Ovary (tissue), 10 donors: ENCODE measurements at regions of chr11 and their contacts with region 1.

Region 1: DNA sequence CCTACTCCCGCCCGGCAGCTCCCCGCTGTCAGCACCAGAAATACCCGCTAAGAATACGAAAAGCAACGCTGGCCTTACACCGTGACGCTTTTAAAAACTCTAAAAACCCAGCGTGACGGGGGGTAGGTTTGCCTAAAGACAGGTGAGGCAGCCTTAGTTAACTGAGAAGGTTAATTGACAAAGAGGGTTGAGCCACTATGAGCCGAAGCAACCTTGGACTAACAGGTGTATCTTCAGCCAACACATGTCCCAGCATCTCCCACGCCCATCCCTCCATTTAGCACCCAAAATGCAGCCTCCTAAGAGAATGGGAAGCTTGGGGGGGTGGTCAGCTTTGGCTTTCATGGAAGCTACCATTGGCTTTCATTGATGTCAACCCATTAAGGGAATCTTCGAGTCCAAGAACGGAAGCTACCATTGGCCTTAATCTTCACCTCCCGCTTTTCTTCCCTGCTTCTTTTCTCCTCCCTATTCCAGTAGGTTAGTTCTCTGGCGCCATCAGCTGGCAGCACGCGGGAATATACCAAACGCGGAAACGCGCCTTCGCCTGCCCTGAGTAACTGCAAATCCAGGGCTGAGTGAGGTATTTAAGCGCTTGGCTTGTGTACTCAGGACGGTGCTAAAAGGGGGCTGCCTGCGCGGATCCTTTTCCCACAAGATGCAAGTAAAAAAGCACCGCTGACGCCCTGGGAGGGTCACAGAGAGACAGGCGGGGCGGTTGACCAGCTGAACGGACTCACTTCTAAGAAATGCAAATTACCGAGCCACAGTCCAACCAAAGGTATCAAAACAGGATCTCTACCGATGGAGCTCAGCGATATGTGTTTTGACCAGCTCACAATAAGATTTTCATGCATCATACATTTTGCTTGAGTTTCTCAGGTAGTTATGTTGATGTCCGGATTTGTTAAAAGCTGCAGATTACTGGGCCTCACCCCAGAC is 38.5 kb upstream of the GLYATL1 start:
- DNase-seq: peak in 1 of 5 donors; percentile 35
- H3K4me3 ChIP-seq: no peak overlapping the region
- H3K27ac ChIP-seq: no peak overlapping the region
- H3K4me1 ChIP-seq: no peaks in the 10 kb centered on the region
- H3K27me3 ChIP-seq: no peaks in the 10 kb centered on the region
- CTCF ChIP-seq: no peak
- EP300 ChIP-seq: no peak
- POLR2A ChIP-seq: no peak

Region 2: DNA sequence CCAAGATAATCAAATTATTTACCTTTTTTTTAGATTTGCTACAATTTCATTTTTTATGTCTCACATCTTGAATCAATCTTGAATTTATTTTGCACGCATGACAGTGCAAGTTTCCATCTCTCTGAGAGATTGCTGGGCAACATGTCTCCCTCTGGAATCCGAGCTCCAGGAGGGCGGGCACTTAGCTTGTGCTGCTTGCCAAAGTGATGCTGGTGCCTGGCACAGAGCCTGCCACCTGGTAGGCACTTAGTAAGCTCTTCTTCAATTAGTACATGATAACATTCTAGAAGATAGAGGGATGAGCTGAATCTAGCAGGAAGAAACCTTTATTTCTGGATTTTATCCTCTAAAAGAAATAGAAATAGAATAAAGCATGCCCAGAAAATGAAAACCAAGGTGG is 748.0 kb before region 1 on chr11:
- intact Hi-C with region 1: loop called in 1 of 4 experiments (anchors 5 kb)
- DNase-seq: no peak
- H3K4me3 ChIP-seq: no peak overlapping the region
- H3K27ac ChIP-seq: no peak overlapping the region
- H3K4me1 ChIP-seq: no peaks in the 10 kb centered on the region
- H3K27me3 ChIP-seq: no peaks in the 10 kb centered on the region
- CTCF ChIP-seq: no peak
- EP300 ChIP-seq: no peak
- POLR2A ChIP-seq: no peak

Region 3: GRCh38 chr11:58286249-58286648 is 614.5 kb before region 1 on chr11:
- intact Hi-C with region 1: no loop called
- DNase-seq: no peak
- H3K4me3 ChIP-seq: no peak overlapping the region
- H3K27ac ChIP-seq: no peak overlapping the region
- H3K4me1 ChIP-seq: no peaks in the 10 kb centered on the region
- H3K27me3 ChIP-seq: no peaks in the 10 kb centered on the region
- CTCF ChIP-seq: no peak
- EP300 ChIP-seq: no peak
- POLR2A ChIP-seq: no peak